ENCODE measurements at regions of chr6 and their contacts with region 1.

Region 1: DNA sequence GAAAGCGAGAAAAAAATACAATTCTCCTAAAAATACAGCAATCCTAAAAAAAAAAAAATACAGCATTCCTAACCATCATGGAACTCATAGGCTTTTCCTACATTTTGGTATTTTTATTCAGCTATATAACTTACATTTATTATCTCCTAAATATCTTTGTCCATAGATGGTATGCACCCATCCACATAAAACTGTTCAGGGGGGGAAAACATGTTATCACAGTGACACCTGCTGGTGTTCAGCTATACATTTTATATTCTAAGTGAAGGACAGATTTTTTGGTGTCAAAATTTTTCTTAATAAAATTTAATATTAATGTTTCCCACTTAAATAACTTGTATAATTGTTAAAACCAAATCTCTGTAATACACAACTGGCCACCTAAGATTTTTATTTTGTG is 58.0 kb downstream of the BLOC1S5 start:
- DNase-seq: peak; percentile 80
- H3K4me3 ChIP-seq: no peak overlapping the region
- H3K27ac ChIP-seq: no peak overlapping the region
- H3K4me1 ChIP-seq: peaks cover 51% of the 10 kb centered on the region
- H3K27me3 ChIP-seq: no peaks in the 10 kb centered on the region
- CTCF ChIP-seq: peak; percentile 23 to 26
- POLR2A ChIP-seq: no peak

Region 2: GRCh38 chr6:7615611-7616383 is 390.4 kb before region 1 on chr6:
- CTCF ChIA-PET with region 1: interaction called, 5 read pairs
- POLR2A ChIA-PET with region 1: no interaction called
- dilution Hi-C with region 1: no loop called
- intact Hi-C with region 1: loop called (anchors 5 kb)
- DNase-seq: peak; percentile 64
- H3K4me3 ChIP-seq: no peak overlapping the region
- H3K27ac ChIP-seq: no peak overlapping the region
- H3K4me1 ChIP-seq: no peaks in the 10 kb centered on the region
- H3K27me3 ChIP-seq: no peaks in the 10 kb centered on the region
- CTCF ChIP-seq: peak; percentile 54 to 66
- POLR2A ChIP-seq: no peak

Region 3: DNA sequence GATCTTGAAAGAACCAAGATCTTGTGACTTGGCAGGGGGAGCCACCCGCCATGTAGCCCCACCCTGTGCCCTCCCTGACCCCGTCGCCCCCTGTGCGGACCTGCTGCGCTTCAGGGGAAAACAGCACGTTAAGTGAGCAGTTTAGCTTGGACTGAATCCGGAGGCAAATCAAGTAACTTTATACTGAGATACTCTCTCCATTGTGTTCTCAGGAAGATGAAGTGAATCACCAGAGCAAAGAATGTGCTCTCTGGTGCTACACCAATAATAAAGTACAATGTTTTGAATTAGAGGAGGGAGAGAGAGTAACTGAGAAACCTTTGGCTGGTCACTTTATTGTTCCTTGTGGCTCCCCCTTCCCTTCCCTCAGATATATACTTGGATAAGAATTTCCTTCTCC is 179.1 kb before region 1 on chr6:
- CTCF ChIA-PET with region 1: no interaction called
- POLR2A ChIA-PET with region 1: no interaction called
- dilution Hi-C with region 1: no loop called
- intact Hi-C with region 1: no loop called
- DNase-seq: peak; percentile 93
- H3K4me3 ChIP-seq: no peak overlapping the region
- H3K27ac ChIP-seq: peak overlapping the region; percentile 74
- H3K4me1 ChIP-seq: peaks cover 53% of the 10 kb centered on the region
- H3K27me3 ChIP-seq: no peaks in the 10 kb centered on the region
- CTCF ChIP-seq: no peak
- POLR2A ChIP-seq: no peak

Region 4: GRCh38 chr6:7878401-7878964 is 127.7 kb before region 1 on chr6:
- CTCF ChIA-PET with region 1: interaction called, 16 read pairs
- POLR2A ChIA-PET with region 1: no interaction called
- dilution Hi-C with region 1: loop called (anchors 25 kb)
- intact Hi-C with region 1: no loop called
- DNase-seq: peak; percentile 48
- H3K4me3 ChIP-seq: no peak overlapping the region
- H3K27ac ChIP-seq: no peak overlapping the region
- H3K4me1 ChIP-seq: peaks cover 14% of the 10 kb centered on the region
- H3K27me3 ChIP-seq: no peaks in the 10 kb centered on the region
- CTCF ChIP-seq: no peak
- POLR2A ChIP-seq: peak; percentile 45

Region 5: GRCh38 chr6:7899101-7899888 is 106.9 kb before region 1 on chr6:
- CTCF ChIA-PET with region 1: interaction called, 33 read pairs
- POLR2A ChIA-PET with region 1: interaction called, 7 read pairs
- dilution Hi-C with region 1: loop called (anchors 25 kb)
- intact Hi-C with region 1: no loop called
- DNase-seq: peak; percentile 40
- H3K4me3 ChIP-seq: no peak overlapping the region
- H3K27ac ChIP-seq: peak overlapping the region; percentile 36
- H3K4me1 ChIP-seq: peaks cover 94% of the 10 kb centered on the region
- H3K27me3 ChIP-seq: no peaks in the 10 kb centered on the region
- CTCF ChIP-seq: no peak
- POLR2A ChIP-seq: peak; percentile 27

Region 6: DNA sequence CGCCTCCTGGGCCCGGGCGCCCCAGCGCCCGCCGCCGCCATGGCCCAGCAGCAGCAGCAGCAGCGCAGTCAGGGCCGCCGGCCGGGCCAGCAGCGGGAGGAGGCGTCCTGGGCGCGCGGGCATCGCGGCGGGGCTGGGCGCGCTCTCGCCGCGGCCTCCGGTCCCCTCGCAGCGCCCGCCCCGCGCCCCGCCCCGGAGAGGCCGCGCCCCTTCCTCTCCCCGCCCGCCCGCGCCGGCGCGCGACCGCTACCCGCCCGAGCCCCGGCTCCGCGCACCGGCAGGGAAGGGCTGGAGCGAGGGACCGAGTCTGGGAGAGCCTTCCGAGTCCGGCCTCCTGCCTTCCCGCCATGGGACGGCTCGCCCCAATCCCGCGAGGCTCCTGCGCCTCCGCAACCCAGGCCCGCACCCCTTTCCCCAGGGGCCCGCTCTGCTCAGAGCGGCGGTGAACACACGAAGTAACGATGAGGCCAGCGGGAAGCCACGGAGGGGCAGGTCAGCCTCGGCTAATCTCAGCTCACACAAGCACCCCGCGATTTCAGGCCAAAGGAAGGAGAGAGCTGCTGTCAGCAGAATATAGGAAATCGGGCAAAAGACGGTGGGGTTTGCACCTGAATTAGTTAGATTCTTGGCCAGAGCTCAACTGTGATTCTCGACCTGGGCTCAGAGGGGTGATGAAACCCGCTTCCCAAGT is 95.4 kb before region 1 on chr6 and contains the start of gene TXNDC5:
- CTCF ChIA-PET with region 1: interaction called, 22 read pairs
- POLR2A ChIA-PET with region 1: interaction called, 22 read pairs
- dilution Hi-C with region 1: no loop called
- intact Hi-C with region 1: no loop called
- DNase-seq: peak; percentile 77
- H3K4me3 ChIP-seq: peak within 1 kb of the TSS; percentile 70 to 97 (median 76)
- H3K27ac ChIP-seq: peak within 1 kb of the TSS; percentile 94
- H3K4me1 ChIP-seq: peaks cover 45% of the 10 kb centered on the region
- H3K27me3 ChIP-seq: no peaks in the 10 kb centered on the region
- CTCF ChIP-seq: no peak
- POLR2A ChIP-seq: peak; percentile 76
- total RNA-seq, gene TXNDC5: 1,581 and 1,665 TPM in 2 replicates

Region 7: DNA sequence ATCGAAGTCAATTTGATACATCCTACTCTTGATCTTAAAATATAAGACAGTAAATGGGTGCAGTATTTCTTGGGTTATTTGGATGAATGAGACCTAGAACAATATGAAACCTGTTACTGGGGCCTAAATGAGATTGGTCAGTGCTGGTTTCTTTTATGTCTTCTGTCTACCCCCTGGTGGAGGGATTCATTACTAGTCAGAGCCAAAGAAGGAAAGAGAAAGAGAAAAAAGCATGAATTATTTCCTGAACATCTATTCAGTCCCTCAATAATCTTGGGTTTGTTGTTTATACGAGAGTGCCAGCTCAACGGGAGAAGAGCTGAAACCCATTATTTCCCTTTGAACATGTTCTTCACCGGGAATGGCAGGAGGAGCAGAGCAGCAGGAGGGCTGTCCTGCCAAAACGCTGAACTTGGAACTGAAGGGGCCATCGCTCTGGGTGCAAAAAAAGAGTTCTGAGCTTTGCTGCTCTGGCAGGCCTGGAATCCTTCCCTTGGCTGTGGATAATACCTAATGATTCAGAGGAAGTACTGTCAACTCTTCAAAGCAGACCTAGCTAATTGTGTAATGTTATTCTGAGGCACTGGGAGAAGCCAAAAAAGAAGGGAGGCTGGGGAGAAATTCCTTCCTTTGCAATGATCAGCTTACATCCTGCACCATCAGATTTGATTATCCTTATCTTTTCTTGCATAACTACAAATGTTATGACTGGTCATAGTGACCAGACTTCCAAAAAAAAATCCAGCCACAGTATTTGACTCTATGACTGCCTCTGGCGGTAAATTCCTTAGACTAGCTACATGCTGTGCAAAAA is 14.0 kb before region 1 on chr6:
- CTCF ChIA-PET with region 1: interaction called, 32 read pairs
- POLR2A ChIA-PET with region 1: interaction called, 10 read pairs
- dilution Hi-C with region 1: no loop called
- intact Hi-C with region 1: loop called (anchors 1 kb)
- DNase-seq: peak; percentile 96
- H3K4me3 ChIP-seq: peak overlapping the region in 1 of 3 experiments; percentile 31
- H3K27ac ChIP-seq: peak overlapping the region; percentile 99
- H3K4me1 ChIP-seq: peaks cover 49% of the 10 kb centered on the region
- H3K27me3 ChIP-seq: no peaks in the 10 kb centered on the region
- CTCF ChIP-seq: peak; percentile 41 to 45
- POLR2A ChIP-seq: peak; percentile 70